ENCODE measurements at regions of chr16 and their contacts with region 1.

Region 1: DNA sequence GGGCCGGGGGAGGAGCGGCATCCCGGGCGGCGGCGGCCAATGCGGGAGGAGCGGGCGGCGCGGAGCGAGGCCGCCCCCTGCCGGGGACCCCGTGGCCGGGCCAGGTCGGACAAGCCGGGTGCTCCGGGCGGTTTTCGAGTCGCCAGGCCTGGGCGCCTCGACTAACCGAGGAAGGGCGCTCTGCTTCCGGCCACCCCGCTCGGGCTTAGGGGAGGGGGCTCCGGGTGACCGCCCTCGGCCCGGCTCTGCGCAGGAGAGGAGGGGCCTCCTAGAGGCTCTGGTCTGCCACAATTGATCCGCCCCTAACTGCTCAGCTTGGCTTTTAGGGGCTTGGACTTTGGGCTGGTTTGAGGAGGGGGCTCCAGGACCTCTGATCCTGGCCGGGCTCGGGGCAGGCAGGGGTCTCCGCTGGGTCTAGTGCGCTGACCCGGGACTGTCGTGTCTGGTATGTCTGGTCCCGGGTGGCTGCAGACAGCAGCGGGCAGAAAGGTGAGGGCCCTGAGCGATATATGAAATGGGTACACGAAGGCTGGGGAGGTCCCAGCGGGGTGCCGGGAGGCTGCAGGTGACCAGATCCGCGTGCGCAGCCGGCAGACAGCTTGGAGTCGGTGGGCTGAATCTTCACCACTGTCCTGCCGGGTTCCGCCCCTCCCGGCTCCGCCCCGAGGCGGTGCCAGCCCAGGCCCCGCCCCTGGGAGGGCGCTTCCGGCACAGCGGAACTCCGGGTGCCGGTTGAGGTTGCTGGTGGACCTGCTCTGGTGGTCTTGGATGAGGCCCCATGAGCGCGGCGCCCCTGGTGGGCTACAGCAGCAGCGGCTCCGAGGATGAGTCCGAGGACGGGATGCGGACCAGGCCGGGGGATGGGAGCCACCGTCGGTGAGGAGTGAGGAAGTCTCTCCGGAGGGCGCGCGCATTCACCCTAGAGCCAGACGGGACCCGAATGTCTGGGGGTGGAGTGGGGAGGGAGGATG is at the start of gene USB1:
- DNase-seq: peak; percentile 80
- ATAC-seq: peak; percentile 78
- H3K4me3 ChIP-seq: peak within 1 kb of the TSS; percentile 94
- H3K27ac ChIP-seq: peak within 1 kb of the TSS; percentile 41; the same call in 1 of the 2 replicates
- H3K4me1 ChIP-seq: peaks cover 18% of the 10 kb centered on the region
- H3K27me3 ChIP-seq: no peaks in the 10 kb centered on the region
- CTCF ChIP-seq: peak; percentile 48
- total RNA-seq, gene USB1: 18.7 and 25.1 TPM in 2 replicates

Region 2: DNA sequence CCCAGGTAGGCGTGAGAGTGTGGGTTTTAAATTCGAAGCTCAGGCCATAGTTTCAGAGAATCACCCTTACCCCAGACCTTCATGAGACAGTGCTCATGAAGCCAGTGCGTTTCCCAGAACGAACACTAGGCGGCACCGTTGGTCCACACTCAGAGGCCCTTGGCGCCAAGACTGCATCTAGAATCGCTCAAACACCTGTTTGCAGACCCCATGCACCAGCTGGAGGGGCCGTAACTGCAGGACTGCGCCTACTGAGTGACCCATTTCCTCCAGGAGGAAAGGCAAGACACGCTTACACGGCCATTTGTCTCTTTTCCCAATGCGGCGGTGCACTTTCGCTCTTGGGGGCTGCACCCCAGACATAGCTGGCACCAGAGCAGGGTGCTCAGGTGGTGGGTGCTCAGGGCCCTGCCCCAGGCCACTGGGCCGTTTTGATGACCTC is 424.5 kb before region 1 on chr16:
- CTCF ChIA-PET with region 1: no interaction called
- POLR2A ChIA-PET with region 1: no interaction called
- intact Hi-C with region 1: loop called (anchors 5 kb)
- DNase-seq: peak; percentile 79
- ATAC-seq: peak; percentile 93
- H3K4me3 ChIP-seq: no peak overlapping the region
- H3K27ac ChIP-seq: no peak overlapping the region
- H3K4me1 ChIP-seq: no peaks in the 10 kb centered on the region
- H3K27me3 ChIP-seq: no peaks in the 10 kb centered on the region
- CTCF ChIP-seq: peak; percentile 87

Region 3: GRCh38 chr16:57757326-57757786 is 243.6 kb before region 1 on chr16:
- CTCF ChIA-PET with region 1: interaction called, 3 read pairs
- POLR2A ChIA-PET with region 1: no interaction called
- intact Hi-C with region 1: loop called (anchors 2 kb)
- DNase-seq: peak; percentile 84
- ATAC-seq: peak; percentile 94
- H3K4me3 ChIP-seq: no peak overlapping the region
- H3K27ac ChIP-seq: no peak overlapping the region
- H3K4me1 ChIP-seq: no peaks in the 10 kb centered on the region
- H3K27me3 ChIP-seq: no peaks in the 10 kb centered on the region
- CTCF ChIP-seq: peak; percentile 83

Region 4: DNA sequence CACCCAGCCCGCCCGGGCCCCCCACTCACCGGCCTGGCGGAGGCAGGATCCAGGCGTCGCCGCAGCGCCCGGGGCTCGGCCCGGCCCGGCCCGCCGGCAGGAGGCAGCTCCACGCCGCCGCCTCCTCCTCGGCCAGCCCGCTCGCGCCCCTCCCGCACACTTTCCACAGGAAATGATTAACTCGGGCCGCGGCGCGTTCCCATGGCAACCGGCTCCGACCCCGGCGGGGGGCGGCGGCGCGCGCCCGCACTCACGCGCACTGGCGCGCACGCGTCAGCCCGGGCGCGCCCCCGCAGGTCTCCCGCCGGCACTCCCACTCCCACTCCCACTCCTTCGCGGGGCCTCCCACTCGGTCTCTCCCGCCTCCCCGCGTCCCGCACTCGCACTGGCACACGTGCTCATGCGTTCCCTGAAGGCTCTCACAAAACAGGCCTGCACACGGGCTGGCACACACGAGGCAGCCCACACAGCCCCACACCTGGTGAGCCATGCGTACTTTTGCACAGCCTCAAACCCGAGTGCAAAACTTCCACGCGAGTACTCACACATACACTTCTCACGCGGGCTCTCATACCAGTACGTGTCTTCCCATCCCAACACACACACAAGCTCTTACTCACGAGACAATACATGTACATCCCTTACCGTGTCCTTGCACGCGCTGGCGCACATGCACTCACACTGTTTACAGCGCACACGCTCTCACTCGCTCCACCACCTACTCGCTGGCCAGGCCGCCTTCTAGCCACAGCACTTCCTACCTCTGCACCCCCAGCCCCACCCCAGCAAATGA is 198.5 kb before region 1 on chr16 and contains the start of gene KIFC3:
- CTCF ChIA-PET with region 1: interaction called, 4 read pairs
- POLR2A ChIA-PET with region 1: no interaction called
- intact Hi-C with region 1: loop called (anchors 10 kb)
- DNase-seq: peak; percentile 68
- ATAC-seq: peak; percentile 56
- H3K4me3 ChIP-seq: peak within 1 kb of the TSS; percentile 81
- H3K27ac ChIP-seq: peak within 1 kb of the TSS; percentile 54
- H3K4me1 ChIP-seq: peaks cover 46% of the 10 kb centered on the region
- H3K27me3 ChIP-seq: no peaks in the 10 kb centered on the region
- CTCF ChIP-seq: no peak
- total RNA-seq, gene KIFC3: 32.6 and 42.2 TPM in 2 replicates

Region 5: DNA sequence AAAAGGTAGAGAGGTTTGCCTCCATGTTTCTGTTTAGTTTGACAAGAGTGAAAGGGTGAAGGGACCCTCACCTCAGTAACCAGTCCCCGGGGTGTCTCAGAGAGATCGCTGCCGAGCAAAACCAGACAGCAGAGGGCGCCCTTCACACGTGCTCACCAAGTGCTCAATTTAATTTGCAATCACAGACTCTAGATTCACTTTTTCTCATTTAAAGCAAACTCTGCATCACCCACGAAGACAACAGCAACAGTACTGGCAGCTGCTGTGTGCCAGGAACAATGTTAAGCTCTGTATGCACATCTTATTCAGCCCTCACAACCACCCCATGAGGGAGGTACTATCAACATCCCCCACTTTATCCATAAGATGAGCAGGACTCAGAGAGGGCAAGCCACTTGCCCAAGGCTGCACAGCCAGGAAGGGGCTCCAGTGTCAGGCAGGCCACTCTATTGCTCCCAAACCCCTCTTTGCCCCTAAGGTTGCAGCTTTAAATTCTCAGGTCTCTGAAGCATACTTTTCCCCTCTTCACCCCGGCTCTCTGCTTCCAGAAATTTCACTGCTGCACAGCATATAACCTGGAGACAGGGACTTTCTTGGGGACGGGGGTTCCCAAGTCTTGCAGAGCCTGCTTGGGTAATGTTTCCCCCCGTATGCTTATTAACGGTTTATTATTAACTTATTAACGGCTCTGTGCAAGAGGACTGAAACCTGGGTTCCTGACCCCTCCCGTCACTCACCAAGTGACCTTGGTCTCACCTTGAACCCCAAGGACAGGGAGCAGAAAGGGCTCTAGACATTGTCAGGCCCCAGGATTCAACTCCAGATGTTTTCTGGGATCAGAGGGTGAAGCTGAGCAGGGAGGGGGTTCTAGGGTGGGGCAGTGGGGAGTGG is 101.0 kb before region 1 on chr16:
- CTCF ChIA-PET with region 1: no interaction called
- POLR2A ChIA-PET with region 1: no interaction called
- intact Hi-C with region 1: loop called (anchors 1 kb)
- DNase-seq: peak; percentile 68
- ATAC-seq: peak; percentile 73
- H3K4me3 ChIP-seq: no peak overlapping the region
- H3K27ac ChIP-seq: no peak overlapping the region
- H3K4me1 ChIP-seq: no peaks in the 10 kb centered on the region
- H3K27me3 ChIP-seq: no peaks in the 10 kb centered on the region
- CTCF ChIP-seq: peak; percentile 86

Measured in PC-3 (cell line).